ENCODE measurements at regions of chr12 and their contacts with region 1.

Region 1: DNA sequence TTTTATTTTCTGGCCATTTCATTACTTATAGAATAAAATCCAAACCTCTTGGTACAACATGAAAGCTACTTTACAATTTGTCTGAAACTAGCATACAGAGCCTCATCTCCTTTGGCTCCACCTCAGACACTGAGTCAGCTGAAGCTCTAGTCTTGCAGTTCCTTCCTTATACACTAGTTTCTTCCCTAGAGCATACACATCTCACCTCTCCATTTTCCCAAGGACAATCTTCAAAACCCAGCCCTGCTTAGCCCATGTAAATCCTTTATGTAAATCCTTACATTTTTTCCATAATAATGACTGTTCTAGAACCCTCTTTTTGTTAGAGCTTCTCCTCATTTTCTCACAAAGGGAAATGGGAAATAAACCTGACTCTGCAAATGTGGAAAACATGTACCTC is 463.4 kb downstream of the SLC16A7 start:
- DNase-seq: no peak
- H3K4me3 ChIP-seq: no peak overlapping the region
- H3K27ac ChIP-seq: no peak overlapping the region
- H3K4me1 ChIP-seq: no peaks in the 10 kb centered on the region
- H3K27me3 ChIP-seq: no peaks in the 10 kb centered on the region
- CTCF ChIP-seq: peak in 1 of 2 donors; percentile 6

Region 2: GRCh38 chr12:60205500-60205899 is 146.3 kb after region 1 on chr12:
- CTCF ChIA-PET with region 1: no interaction called
- dilution Hi-C with region 1: no loop called
- in situ Hi-C with region 1: no loop called
- intact Hi-C with region 1: no loop called
- DNase-seq: peak; percentile 49
- H3K4me3 ChIP-seq: no peak overlapping the region
- H3K27ac ChIP-seq: no peak overlapping the region
- H3K4me1 ChIP-seq: peaks cover 5% of the 10 kb centered on the region
- H3K27me3 ChIP-seq: no peaks in the 10 kb centered on the region
- CTCF ChIP-seq: no peak

Region 3: GRCh38 chr12:60335745-60336144 is 276.6 kb after region 1 on chr12:
- CTCF ChIA-PET with region 1: interaction called, 11 read pairs
- dilution Hi-C with region 1: no loop called
- in situ Hi-C with region 1: no loop called
- intact Hi-C with region 1: no loop called
- DNase-seq: peak; percentile 45
- H3K4me3 ChIP-seq: no peak overlapping the region
- H3K27ac ChIP-seq: peak overlapping the region; percentile 4
- H3K4me1 ChIP-seq: peaks cover 3% of the 10 kb centered on the region
- H3K27me3 ChIP-seq: no peaks in the 10 kb centered on the region
- CTCF ChIP-seq: no peak

Measured in mammary epithelial cell (primary cell).